Uterus (tissue), 4 donors: ENCODE measurements at regions of chr16 and their contacts with region 1.

Region 1: DNA sequence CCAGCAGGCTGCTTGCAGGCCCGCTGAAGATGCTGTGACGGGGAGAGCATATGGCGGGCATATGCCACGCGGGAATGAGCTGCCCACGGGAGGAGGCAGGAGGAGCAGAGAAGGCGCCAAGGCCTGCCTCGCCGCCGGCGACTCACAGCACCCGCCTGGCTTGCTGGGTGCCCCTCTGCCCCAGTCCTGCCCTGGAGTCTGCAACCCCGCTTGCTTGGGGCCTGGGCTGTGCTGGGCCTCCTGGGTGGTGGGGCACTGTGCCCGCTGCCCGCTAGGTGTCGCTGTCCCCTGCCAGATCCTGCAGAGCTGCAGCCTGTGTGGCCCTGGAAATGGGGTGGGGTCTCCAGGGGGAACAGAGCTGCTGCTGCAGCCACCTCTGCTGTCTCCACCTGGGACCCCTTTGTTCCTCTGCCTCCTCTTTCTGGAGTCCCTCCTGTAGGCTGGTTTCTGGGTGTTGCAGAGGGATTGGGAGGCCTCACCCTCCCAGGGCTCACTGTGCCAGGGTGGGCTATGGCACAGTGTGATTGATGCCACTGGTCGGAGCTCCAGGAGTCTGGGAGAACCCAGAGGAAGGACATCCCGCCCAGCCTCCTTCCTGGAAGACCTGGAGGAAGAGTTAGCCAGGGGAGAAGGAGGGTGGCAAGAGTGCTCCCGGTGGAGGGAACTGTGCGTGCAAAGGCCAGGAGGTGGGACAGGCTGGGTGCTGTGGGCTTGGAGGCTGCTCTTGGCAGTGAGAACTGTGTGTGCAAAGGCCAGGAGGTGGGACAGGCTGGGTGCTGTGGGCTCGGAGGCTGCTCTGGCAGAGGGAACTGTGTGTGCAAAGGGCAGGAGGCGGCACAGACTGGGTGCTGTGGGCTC is 141.0 kb upstream of the CIBAR2 start:
- DNase-seq: peak in 1 of 2 donors; percentile 53
- H3K4me3 ChIP-seq: no peak overlapping the region
- H3K27ac ChIP-seq: no peak overlapping the region
- H3K4me1 ChIP-seq: no peaks in the 10 kb centered on the region
- H3K27me3 ChIP-seq: no peaks in the 10 kb centered on the region
- CTCF ChIP-seq: peak; percentile 74 to 86 (median 78)
- POLR2A ChIP-seq: no peak

Region 2: DNA sequence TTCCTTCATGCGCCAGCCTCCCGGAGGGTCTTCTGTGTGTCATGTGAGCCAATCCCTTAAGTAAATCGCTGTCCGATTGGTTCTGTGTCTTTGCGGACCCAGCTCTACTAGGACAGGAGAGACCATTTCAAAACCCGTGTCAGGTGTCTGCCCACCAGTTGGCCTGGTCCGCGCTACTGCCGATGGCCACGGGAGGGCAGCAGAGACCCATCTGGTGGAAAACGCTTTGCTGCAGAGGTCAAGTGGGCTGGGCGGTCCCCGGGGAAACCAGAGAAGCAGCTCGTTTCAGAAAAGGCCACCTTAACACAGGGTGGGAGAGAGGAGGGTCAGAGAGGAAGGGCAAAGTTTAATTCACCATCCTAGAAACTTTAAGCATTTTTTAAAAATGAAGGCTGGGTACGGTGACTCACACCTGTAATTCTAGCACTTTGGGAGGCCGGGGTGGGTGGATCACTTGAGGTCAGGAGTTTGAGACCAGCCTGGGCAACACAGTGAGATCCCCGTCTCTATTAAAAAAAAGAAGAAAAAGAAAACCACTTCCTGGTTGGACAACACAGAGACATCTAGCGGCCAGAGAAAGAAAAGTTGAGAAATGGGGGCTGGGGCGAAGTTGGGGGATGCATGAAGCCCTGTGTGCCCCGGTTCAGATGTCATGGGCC is 138.3 kb before region 1 on chr16:
- intact Hi-C with region 1: loop called (anchors 10 kb)
- DNase-seq: peak; percentile 86 to 91
- H3K4me3 ChIP-seq: no peak overlapping the region
- H3K27ac ChIP-seq: no peak overlapping the region
- H3K4me1 ChIP-seq: no peaks in the 10 kb centered on the region
- H3K27me3 ChIP-seq: no peaks in the 10 kb centered on the region
- CTCF ChIP-seq: peak; percentile 91 to 99 (median 96)
- POLR2A ChIP-seq: peak in 1 of 2 donors; percentile 18